ENCODE measurements at regions of chr3 and their contacts with region 1.

Region 1: DNA sequence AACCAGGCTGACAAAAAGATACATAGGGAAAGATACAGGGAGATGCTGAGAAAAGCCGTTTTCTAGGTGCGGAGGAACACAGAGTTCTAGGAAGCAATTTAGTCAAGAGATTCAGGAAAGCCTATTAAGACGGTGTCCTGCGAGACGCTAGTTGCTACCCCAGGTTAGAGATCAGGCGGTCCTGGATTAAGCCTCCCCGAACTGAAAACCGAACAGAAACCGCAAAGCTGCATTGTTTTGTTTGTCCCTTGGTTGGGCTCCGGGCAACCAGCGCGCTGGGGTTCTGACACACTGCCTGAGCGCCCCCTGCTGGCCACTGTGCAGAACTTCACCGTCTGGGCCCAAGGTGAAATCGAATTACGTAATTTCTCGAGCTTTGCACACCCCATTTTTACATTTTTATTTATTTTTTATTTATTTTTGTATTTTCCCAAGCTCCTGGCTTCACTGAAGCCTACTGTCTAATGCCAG is 37.3 kb upstream of the NDUFB4 start:
- DNase-seq: peak; percentile 94

Region 2: DNA sequence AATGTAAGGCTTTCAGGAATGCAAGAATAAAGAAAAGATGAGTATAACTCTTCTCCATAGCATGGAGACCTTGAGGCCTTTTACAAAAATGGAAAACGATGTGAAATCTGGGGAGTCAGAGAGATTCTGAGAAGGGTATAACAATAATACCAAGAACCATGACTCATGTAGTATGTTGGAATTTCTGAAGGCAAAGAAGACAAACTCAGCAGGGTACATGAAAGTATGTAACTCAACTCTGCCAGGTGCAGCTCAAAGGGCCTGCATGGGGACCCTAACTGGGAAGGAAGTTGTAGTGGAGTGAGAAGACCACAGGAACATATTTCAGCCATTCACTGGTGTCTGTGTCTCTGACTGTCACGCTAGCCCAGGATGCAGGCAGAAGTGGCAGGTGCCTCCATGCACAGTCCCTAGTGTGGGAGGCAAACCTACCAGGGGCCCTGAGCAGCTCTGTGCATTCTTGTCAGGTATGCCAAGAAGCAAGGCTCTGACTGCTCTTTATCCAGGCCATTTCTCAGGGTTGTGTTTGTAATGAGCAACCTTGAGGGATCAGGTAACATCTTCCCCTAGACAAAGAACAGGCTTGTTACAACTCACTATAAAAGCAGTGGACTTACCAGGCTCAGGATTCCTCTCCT is 331.0 kb before region 1 on chr3:
- in situ Hi-C with region 1: loop called (anchors 25 kb)
- DNase-seq: no peak

Region 3: GRCh38 chr3:120795017-120795648 is 236.3 kb after region 1 on chr3:
- in situ Hi-C with region 1: loop called (anchors 10 kb)
- DNase-seq: peak; percentile 83

Measured in KBM-7 (cell line).